Activated T-helper 2 cell treated with anti-CD3 and anti-CD28 coated beads, Interferon-gamma antibody, Interleukin-2, Interleukin-4, amounts not matched to agents 10 μg/mL and 5 μg/mL and 100 μg/mL, durations not matched to agents 14 hours and 24 hours and 36 hours (primary cell): ENCODE measurements at regions of chr12 and their contacts with region 1.

Region 1: GRCh38 chr12:106357549-106358395 is at the start of gene POLR3B:
- DNase-seq: peak; percentile 94
- H3K4me3 Mint-ChIP-seq: peak within 1 kb of the TSS; percentile 91
- H3K27ac Mint-ChIP-seq: peak within 1 kb of the TSS; percentile 90
- H3K4me1 Mint-ChIP-seq: peaks cover 12% of the 10 kb centered on the region
- H3K27me3 Mint-ChIP-seq: no peaks in the 10 kb centered on the region
- total RNA-seq, gene POLR3B: 8.7 and 8.9 TPM in 2 replicates

Region 2: DNA sequence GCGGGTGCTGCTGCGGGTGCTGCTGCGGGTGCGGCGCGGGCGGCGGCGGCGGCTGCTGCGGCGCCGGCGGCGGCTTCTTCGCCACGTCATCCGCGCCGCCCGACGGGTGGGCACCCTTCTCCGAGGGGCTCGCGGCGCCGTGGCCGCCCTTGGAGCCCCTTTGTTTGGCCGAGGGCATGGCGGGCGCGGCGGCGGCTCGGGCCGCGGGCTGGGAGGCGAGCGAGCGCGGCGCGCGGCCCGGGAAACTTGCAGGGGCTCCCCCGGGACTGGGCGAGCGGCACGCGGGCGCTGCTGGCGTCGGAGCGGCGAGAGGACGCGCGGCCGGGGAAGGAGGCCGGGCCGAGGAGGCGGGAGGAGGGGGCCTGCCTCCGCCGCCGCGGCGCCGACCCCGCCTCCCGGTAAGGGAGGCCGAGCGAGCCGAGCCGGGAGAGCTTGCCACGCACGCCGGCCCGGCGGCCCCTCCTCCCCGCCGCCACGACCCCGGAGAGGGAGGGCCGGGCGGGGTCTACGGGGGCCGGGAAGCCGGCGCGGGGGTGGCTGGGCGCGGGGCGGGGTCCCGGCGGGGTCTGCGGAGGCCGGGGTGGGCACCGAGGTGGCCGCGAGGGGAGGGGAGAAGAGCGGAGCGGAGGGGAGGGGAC is 110.0 kb before region 1 on chr12 and contains the start of gene CKAP4:
- intact Hi-C with region 1: loop called (anchors 5 kb)
- DNase-seq: peak; percentile 24
- H3K4me3 Mint-ChIP-seq: peak within 1 kb of the TSS; percentile 68
- H3K27ac Mint-ChIP-seq: peak within 1 kb of the TSS; percentile 67
- H3K4me1 Mint-ChIP-seq: peaks cover 9% of the 10 kb centered on the region
- H3K27me3 Mint-ChIP-seq: peaks cover 22% of the 10 kb centered on the region
- total RNA-seq, gene CKAP4: 5.0 and 5.7 TPM in 2 replicates

Region 3: DNA sequence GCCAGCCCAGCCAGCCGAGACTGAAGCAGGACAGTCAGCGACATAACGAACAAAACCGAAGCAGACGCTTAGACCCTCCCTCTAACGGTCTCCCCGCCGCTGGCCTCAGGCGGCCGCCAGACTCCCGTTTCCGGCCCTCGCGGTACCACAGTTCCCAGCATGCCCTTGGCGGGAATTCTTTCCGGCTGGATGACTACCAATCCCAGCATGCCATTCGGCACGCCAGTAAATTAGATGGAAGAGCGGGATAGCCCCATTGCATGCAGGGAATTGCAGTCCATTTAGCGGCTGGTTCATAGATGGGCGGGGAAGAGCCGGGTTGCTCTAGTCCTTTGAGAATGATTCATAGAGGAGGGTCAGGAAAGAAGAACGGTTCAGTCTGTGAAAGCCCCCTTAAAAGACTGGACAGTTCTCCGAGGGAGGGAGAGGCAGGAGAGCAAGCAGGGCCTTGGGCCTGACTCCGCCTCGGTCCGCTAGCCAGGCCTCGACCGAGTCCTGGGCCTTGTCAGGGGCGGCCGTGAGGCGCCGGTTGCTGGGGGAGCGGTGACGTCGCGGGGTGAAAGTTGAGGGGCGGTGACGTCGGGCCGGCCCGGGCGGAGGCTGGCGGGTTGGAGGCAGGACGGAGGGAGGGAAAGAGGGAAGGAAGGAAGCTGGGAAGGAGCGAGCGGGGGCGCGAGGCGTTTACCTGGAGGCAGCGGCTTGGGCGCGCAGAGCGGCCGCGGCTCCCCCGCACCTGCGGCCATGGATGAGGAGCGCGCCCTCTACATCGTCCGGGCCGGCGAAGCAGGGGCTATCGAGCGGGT is 416.4 kb after region 1 on chr12 and contains the start of gene RIC8B:
- intact Hi-C with region 1: loop called (anchors 10 kb)
- DNase-seq: peak; percentile 76
- H3K4me3 Mint-ChIP-seq: peak within 1 kb of the TSS; percentile 96
- H3K27ac Mint-ChIP-seq: peak within 1 kb of the TSS; percentile 92
- H3K4me1 Mint-ChIP-seq: peaks cover 18% of the 10 kb centered on the region
- H3K27me3 Mint-ChIP-seq: peaks cover 5% of the 10 kb centered on the region
- total RNA-seq, gene RIC8B: 11.4 and 16.4 TPM in 2 replicates

Region 4: GRCh38 chr12:106919910-106920544 is 562.3 kb after region 1 on chr12:
- intact Hi-C with region 1: loop called (anchors 1 kb)
- DNase-seq: no peak
- H3K4me3 Mint-ChIP-seq: no peak overlapping the region
- H3K27ac Mint-ChIP-seq: no peak overlapping the region
- H3K4me1 Mint-ChIP-seq: peaks cover 14% of the 10 kb centered on the region
- H3K27me3 Mint-ChIP-seq: peaks cover 27% of the 10 kb centered on the region